Heart left ventricle (tissue), 16 donors: ENCODE measurements at regions of chr18 and their contacts with region 1.

Region 1: DNA sequence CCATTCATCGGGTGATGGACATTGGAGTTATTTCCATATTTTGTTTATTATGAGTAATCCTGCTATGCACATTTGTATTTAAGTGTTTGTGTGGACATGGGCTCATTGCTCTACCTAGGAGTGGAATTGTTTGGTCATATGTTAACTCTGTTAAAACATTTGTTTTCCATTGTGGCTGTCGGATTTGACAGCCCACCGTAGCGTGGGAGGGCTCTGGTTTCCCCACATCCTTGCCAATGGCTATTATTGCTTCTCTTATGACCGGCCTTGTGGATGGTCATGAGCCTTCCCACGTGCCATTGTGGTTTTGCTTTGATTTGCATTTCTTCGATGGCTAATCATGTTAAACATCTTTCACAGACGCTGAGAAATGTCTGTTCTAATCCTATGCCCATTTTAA is 92.0 kb downstream of the ZNF236 start:
- DNase-seq: no peak
- ATAC-seq: no peak
- H3K4me3 ChIP-seq: no peak overlapping the region
- H3K27ac ChIP-seq: no peak overlapping the region
- H3K4me1 ChIP-seq: peaks cover 0 to 4% (median 0%) of the 10 kb centered on the region in 12 donors
- H3K27me3 ChIP-seq: no peaks in the 10 kb centered on the region
- CTCF ChIP-seq: no peak
- POLR2A ChIP-seq: no peak

Region 2: DNA sequence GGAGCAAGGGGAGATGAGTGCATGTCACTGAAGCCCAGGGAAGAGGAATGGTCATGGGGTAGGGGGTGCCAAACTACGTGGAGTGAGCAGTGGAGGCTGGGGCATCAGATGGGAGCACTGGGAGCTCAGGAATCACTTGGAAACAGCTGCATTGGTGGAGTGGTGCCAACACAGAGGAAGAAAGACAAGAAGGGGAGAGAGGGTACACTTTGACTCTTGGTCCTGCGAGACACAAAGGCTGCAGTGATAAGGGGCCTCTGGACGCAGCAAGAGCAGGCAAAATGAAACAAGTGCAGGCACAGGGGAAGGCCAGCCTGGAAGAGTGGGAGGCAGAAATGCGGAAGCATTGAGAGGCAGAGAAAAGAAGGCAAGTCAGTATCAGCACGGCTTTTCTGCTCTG is 1352.1 kb before region 1 on chr18:
- intact Hi-C with region 1: loop called in 1 of 10 experiments (anchors 10 kb)
- DNase-seq: no peak
- ATAC-seq: no peak
- H3K4me3 ChIP-seq: no peak overlapping the region
- H3K27ac ChIP-seq: no peak overlapping the region
- H3K4me1 ChIP-seq: no peaks in the 10 kb centered on the region
- H3K27me3 ChIP-seq: no peaks in the 10 kb centered on the region
- CTCF ChIP-seq: no peak
- POLR2A ChIP-seq: no peak